Activated naive CD4-positive, alpha-beta T cell treated with anti-CD3 and anti-CD28 coated beads for 36 hours (primary cell): ENCODE measurements at regions of chr13 and their contacts with region 1.

Region 1: DNA sequence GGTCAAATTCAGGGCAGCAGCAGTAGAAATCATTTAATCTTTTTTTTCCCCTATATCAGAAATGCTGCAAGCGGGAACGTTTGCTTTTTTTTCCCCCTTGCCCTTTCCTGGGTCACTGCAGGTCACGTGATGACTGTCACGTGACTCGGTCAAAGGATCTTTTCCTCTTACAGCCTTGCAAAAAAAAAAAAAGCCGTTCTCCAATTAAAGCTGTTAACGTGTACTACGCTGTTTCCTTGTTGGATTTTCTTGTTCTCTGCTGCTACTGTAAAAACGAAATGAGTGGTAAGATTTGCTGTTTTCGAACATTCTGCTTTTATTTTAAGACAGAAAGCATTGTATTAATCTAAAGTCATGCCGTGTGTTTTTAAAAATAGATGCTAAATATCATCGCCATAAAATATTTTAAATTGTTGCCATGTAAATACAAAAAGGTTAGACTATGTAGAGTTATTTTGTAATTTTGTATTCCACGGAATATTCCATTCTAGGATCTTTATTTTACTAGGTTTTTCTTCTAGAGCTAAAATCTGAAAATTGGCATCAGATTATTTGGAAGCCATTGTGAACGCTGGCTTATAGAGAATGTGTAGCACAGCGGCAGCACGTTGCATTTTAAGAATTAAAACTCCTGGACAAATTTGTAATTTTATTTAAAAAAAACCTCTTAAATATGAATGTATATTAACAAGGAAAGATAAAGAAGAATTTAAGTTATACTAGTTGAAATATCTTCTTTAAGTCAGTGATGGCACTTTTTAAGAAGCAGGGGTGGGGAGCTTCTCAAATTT is 109.8 kb upstream of the MLNR start:
- DNase-seq: peak; percentile 87
- H3K4me3 Mint-ChIP-seq: peak overlapping the region; percentile 75
- H3K27ac Mint-ChIP-seq: peak overlapping the region; percentile 84
- H3K4me1 Mint-ChIP-seq: peaks cover 25% of the 10 kb centered on the region
- H3K27me3 Mint-ChIP-seq: no peaks in the 10 kb centered on the region

Region 2: DNA sequence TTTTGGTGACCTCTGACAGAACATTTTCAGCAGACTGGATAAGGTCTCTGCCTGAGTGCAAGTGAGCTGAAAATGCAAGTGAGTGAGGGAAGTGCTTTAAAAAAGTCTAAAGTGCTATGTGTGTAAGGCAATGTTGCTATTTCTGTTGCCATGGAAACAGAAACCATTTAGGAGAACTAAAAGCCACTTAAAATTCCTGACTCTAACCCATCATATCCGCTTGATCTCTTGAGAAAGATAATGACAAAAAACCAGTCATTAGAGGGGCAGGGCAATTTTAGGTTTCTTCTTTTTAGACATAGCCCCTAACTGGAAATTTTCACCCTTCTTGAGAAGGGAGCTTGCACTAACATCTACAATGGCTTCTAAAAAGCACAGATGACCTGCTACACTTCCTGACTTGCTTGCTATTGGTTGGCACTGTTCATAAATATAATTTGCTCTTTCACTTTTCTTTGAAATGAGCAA is 456.8 kb before region 1 on chr13 and contains the start of gene CYSLTR2:
- CTCF ChIA-PET with region 1: no interaction called
- intact Hi-C with region 1: loop called (anchors 1 kb)
- DNase-seq: peak; percentile 27
- H3K4me3 Mint-ChIP-seq: peak within 1 kb of the TSS; percentile 75
- H3K27ac Mint-ChIP-seq: peak within 1 kb of the TSS; percentile 82
- H3K4me1 Mint-ChIP-seq: peaks cover 29% of the 10 kb centered on the region
- H3K27me3 Mint-ChIP-seq: no peaks in the 10 kb centered on the region
- total RNA-seq, gene CYSLTR2: 1.3 to 1.7 TPM

Region 3: GRCh38 chr13:48885027-48885395 is 225.3 kb before region 1 on chr13:
- CTCF ChIA-PET with region 1: no interaction called
- intact Hi-C with region 1: loop called (anchors 2 kb)
- DNase-seq: no peak
- H3K4me3 Mint-ChIP-seq: no peak overlapping the region
- H3K27ac Mint-ChIP-seq: peak overlapping the region; percentile 79
- H3K4me1 Mint-ChIP-seq: peaks cover 51% of the 10 kb centered on the region
- H3K27me3 Mint-ChIP-seq: peaks cover 2% of the 10 kb centered on the region

Region 4: DNA sequence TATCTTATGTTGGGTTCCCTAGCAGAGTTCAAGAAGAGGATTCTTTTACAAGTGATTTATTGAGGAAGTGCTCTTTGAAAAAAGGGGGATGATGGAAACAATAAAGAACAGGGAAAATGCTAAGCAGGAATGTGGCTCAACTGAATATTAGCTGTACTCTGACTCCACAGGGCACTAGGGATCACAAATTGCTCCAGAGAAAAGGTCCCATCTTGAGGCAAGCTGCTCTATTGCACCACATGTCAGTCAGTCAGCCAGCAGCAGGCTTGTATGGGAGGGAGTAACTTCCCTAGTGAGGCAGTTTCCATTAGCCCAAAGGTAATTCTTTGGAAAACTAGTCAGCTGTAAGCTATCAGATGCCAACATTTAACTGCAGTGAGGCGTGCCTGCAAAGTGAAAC is 207.9 kb before region 1 on chr13:
- CTCF ChIA-PET with region 1: no interaction called
- intact Hi-C with region 1: no loop called
- DNase-seq: no peak
- H3K4me3 Mint-ChIP-seq: no peak overlapping the region
- H3K27ac Mint-ChIP-seq: no peak overlapping the region
- H3K4me1 Mint-ChIP-seq: peaks cover 4% of the 10 kb centered on the region
- H3K27me3 Mint-ChIP-seq: peaks cover 24% of the 10 kb centered on the region

Region 5: GRCh38 chr13:49093376-49093775 is 16.9 kb before region 1 on chr13:
- CTCF ChIA-PET with region 1: no interaction called
- intact Hi-C with region 1: no loop called
- DNase-seq: no peak
- H3K4me3 Mint-ChIP-seq: no peak overlapping the region
- H3K27ac Mint-ChIP-seq: no peak overlapping the region
- H3K4me1 Mint-ChIP-seq: peaks cover 17% of the 10 kb centered on the region
- H3K27me3 Mint-ChIP-seq: no peaks in the 10 kb centered on the region

Region 6: DNA sequence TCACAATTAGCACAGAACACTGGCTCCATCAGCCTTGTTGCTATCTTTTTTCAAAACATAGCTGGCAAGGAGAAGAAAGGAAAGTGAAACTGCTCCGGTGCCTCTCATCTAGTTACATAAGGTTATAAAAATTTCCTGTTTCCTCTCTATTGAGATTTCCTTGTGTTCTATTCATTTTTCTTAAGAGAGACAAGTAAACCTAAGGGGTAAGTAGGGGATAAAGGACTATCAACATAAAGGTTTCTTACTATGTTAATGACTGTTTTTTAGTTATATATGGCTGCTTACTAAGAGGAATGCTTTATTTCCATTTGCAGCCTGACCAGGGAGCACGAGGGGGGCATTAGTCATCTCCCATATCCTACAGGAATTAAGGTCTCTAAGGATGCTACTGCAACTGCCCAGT is 36.6 kb after region 1 on chr13:
- CTCF ChIA-PET with region 1: interaction called, 5 read pairs
- intact Hi-C with region 1: loop called (anchors 2 kb)
- DNase-seq: peak; percentile 17
- H3K4me3 Mint-ChIP-seq: peak overlapping the region; percentile 49
- H3K27ac Mint-ChIP-seq: peak overlapping the region; percentile 80
- H3K4me1 Mint-ChIP-seq: peaks cover 29% of the 10 kb centered on the region
- H3K27me3 Mint-ChIP-seq: no peaks in the 10 kb centered on the region

Region 7: DNA sequence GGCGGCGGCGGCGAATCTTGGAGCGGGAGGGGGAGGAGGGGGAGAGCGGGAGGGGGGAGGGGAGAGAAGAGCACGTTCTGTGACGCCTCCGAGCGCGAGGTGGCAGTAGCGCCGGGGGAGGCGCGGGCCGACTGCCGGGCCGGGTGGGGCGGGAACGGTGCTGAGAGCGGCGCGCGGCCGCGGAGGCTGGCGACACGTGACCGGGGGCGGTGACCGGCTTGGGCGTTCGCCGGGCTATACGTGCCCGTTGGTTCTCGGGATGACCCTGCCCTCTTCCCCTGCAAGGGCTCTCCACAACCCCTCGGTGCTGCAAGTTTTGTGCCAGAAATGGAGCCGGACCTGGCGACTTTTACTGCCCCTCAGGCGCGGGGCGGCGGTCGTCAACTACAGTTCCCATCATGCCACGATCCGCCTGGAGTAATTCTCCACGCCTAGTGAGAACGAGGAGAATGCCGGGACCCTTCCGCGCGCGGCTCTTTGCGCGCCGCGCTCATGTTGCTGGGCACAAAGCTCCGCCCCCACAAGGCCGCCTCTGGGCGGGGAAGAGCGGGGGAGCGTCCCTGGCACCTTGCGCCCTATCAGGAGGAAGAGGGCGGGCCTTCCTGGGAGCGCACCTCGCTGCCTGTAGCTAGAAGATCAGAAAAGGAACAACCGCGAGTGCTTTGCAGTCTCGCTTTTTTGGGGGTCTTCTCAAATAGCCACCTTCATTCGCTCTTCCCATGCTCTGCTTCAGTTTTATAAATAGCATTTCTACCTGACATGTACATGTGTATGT is 682.4 kb after region 1 on chr13 and contains the start of gene KPNA3:
- CTCF ChIA-PET with region 1: no interaction called
- intact Hi-C with region 1: loop called (anchors 10 kb)
- DNase-seq: peak; percentile 96
- H3K4me3 Mint-ChIP-seq: peak within 1 kb of the TSS; percentile 92
- H3K27ac Mint-ChIP-seq: peak within 1 kb of the TSS; percentile 94
- H3K4me1 Mint-ChIP-seq: peaks cover 29% of the 10 kb centered on the region
- H3K27me3 Mint-ChIP-seq: peaks cover 4% of the 10 kb centered on the region
- total RNA-seq, gene KPNA3: 47.9 to 50.7 TPM